ENCODE measurements at regions of chr3 and their contacts with region 1.

Region 1: GRCh38 chr3:186617038-186617946 is 4.4 kb downstream of the AHSG start:
- DNase-seq: peak; percentile 83
- H3K4me3 ChIP-seq: no peak overlapping the region
- H3K27ac ChIP-seq: no peak overlapping the region
- H3K4me1 ChIP-seq: peaks cover 5% of the 10 kb centered on the region
- H3K27me3 ChIP-seq: peaks cover 4 to 19% of the 10 kb centered on the region in 2 experiments
- CTCF ChIP-seq: peak; percentile 98
- POLR2A ChIP-seq: no peak

Region 2: DNA sequence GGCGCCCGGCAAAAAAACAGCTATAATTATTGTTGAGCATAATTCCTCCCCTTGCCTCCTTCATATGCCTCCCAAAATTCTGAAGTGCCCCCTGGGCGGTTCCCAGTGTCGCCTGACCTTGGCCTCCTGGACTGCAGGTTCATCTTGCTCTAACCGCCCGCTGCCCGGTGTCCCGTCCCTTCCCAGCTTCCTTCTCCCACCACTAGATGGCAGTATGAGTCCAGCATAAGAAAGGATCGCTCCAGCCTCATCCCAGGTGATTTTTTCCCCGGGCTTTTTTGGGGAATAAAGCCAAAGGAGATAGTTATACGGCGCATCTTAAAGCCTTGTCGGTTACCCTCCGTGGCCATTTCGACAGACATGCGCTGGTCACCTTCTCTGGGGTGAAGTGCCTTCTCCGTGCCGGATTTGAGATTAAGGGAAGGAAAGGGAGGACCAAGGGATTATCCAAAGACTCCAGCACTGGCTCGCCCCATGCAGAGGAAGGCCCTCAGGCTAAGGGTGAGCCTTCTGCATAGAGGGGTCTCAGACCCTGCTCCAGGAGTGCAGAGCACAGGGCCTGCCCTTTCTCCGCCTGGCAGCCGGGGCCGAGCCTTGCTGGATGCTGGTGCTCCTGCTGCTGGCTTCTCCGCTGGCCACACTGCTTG is 633.7 kb before region 1 on chr3:
- CTCF ChIA-PET with region 1: interaction called, 48 read pairs
- POLR2A ChIA-PET with region 1: interaction called, 4 read pairs
- dilution Hi-C with region 1: no loop called
- intact Hi-C with region 1: loop called (anchors 2 kb)
- DNase-seq: peak; percentile 55
- H3K4me3 ChIP-seq: no peak overlapping the region
- H3K27ac ChIP-seq: no peak overlapping the region
- H3K4me1 ChIP-seq: peaks cover 6% of the 10 kb centered on the region
- H3K27me3 ChIP-seq: no peaks in the 10 kb centered on the region
- CTCF ChIP-seq: peak; percentile 77 to 88
- POLR2A ChIP-seq: no peak

Region 3: DNA sequence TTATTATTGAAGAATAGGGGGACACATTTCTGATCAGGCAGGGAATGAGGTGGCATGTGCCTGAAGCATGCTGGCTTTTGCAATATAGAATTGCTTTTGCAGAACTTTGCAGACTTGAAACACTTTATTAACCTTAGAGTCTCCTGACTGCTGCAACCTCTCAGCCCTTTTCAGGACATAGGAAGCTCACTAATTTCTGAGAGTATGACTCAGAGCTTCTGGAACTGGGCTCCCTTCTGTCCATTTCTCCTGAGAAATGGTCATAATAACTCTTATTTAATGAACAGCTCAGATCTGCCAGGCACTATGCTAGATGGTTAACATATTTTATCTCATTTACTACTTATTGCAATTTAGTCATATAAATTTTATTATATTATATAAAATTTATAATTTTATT is 216.6 kb before region 1 on chr3:
- CTCF ChIA-PET with region 1: no interaction called
- POLR2A ChIA-PET with region 1: no interaction called
- dilution Hi-C with region 1: no loop called
- intact Hi-C with region 1: no loop called
- DNase-seq: no peak
- H3K4me3 ChIP-seq: no peak overlapping the region
- H3K27ac ChIP-seq: no peak overlapping the region
- H3K4me1 ChIP-seq: no peaks in the 10 kb centered on the region
- H3K27me3 ChIP-seq: no peaks in the 10 kb centered on the region
- CTCF ChIP-seq: no peak
- POLR2A ChIP-seq: no peak

Region 4: DNA sequence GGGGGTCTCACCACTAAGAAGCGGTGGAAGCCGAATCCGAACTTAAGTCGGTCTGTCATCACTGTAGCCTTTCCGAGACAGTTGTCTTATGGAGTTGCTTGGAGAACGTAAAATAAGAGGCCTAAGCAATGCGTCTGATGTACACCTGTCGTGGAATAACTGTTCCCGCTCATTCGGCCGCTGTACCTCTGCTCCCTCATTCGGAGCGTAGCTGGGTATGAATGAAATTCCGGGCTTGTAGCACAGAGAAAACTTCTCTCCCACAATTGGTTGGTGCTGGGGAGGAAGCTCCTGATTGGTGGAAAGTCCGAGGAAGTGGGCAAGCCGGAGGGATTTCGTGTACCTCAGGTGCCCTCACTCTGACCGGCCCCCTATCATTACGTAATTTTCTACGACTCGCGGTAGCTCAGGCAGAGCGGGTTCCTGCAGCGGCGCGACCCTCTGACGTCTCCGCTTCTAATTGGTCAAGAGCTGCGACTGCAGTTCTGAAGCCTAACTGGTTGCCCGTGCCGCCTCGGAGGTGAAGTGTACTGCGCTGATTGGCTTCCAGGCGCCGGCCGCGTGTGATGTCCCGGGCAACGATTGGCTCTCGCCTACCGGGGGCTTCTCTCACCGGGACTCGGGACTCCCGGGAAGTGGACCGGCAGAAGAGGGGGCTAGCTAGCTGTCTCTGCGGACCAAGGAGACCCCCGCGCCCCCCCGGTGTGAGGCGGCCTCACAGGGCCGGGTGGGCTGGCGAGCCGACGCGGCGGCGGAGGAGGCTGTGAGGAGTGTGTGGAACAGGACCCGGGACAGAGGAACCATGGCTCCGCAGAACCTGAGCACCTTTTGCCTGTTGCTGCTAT is 47.0 kb before region 1 on chr3 and contains the start of gene DNAJB11:
- CTCF ChIA-PET with region 1: interaction called, 8 read pairs
- POLR2A ChIA-PET with region 1: interaction called, 3 read pairs
- dilution Hi-C with region 1: no loop called
- intact Hi-C with region 1: loop called (anchors 2 kb)
- DNase-seq: peak; percentile 100
- H3K4me3 ChIP-seq: peak within 1 kb of the TSS; percentile 80 to 91 (median 90)
- H3K27ac ChIP-seq: peak within 1 kb of the TSS; percentile 67
- H3K4me1 ChIP-seq: peaks cover 18% of the 10 kb centered on the region
- H3K27me3 ChIP-seq: no peaks in the 10 kb centered on the region
- CTCF ChIP-seq: no peak
- POLR2A ChIP-seq: peak; percentile 87
- total RNA-seq, gene DNAJB11: 87.6 and 100 TPM in 2 replicates

Region 5: GRCh38 chr3:186598108-186598784 is 19.0 kb before region 1 on chr3:
- CTCF ChIA-PET with region 1: interaction called, 11 read pairs
- POLR2A ChIA-PET with region 1: no interaction called
- dilution Hi-C with region 1: no loop called
- intact Hi-C with region 1: no loop called
- DNase-seq: no peak
- H3K4me3 ChIP-seq: no peak overlapping the region
- H3K27ac ChIP-seq: no peak overlapping the region
- H3K4me1 ChIP-seq: no peaks in the 10 kb centered on the region
- H3K27me3 ChIP-seq: peaks cover 0 to 4% of the 10 kb centered on the region in 2 experiments
- CTCF ChIP-seq: no peak
- POLR2A ChIP-seq: no peak

Region 6: GRCh38 chr3:186783073-186783730 is 165.9 kb after region 1 on chr3 and contains the start of gene EIF4A2:
- CTCF ChIA-PET with region 1: interaction called, 12 read pairs
- POLR2A ChIA-PET with region 1: no interaction called
- dilution Hi-C with region 1: no loop called
- intact Hi-C with region 1: no loop called
- DNase-seq: peak; percentile 86
- H3K4me3 ChIP-seq: peak within 1 kb of the TSS; percentile 38 to 85 (median 72)
- H3K27ac ChIP-seq: peak within 1 kb of the TSS; percentile 93
- H3K4me1 ChIP-seq: peaks cover 26% of the 10 kb centered on the region
- H3K27me3 ChIP-seq: no peaks in the 10 kb centered on the region
- CTCF ChIP-seq: no peak
- POLR2A ChIP-seq: peak; percentile 99
- total RNA-seq, gene EIF4A2: 260 and 282 TPM in 2 replicates

Region 7: GRCh38 chr3:187072511-187072910 is 455.2 kb after region 1 on chr3:
- CTCF ChIA-PET with region 1: no interaction called
- POLR2A ChIA-PET with region 1: no interaction called
- dilution Hi-C with region 1: no loop called
- intact Hi-C with region 1: no loop called
- DNase-seq: no peak
- H3K4me3 ChIP-seq: no peak overlapping the region
- H3K27ac ChIP-seq: no peak overlapping the region
- H3K4me1 ChIP-seq: no peaks in the 10 kb centered on the region
- H3K27me3 ChIP-seq: no peaks in the 10 kb centered on the region
- CTCF ChIP-seq: no peak
- POLR2A ChIP-seq: no peak